Vagina (tissue), 2 donors: ENCODE measurements at regions of chr19 and their contacts with region 1.

Region 1: GRCh38 chr19:16111160-16111908 is at the start of gene RAB8A:
- DNase-seq: peak in 1 of 2 donors; percentile 100
- H3K4me3 ChIP-seq: peak within 1 kb of the TSS; percentile 58 to 90
- H3K27ac ChIP-seq: peak within 1 kb of the TSS; percentile 88
- H3K4me1 ChIP-seq: peaks cover 53% of the 10 kb centered on the region
- H3K27me3 ChIP-seq: no peaks in the 10 kb centered on the region
- CTCF ChIP-seq: peak; percentile 94 to 99 (median 99)
- POLR2A ChIP-seq: peak in 1 of 2 donors; percentile 51
- total RNA-seq, gene RAB8A: 30.4 TPM

Region 2: DNA sequence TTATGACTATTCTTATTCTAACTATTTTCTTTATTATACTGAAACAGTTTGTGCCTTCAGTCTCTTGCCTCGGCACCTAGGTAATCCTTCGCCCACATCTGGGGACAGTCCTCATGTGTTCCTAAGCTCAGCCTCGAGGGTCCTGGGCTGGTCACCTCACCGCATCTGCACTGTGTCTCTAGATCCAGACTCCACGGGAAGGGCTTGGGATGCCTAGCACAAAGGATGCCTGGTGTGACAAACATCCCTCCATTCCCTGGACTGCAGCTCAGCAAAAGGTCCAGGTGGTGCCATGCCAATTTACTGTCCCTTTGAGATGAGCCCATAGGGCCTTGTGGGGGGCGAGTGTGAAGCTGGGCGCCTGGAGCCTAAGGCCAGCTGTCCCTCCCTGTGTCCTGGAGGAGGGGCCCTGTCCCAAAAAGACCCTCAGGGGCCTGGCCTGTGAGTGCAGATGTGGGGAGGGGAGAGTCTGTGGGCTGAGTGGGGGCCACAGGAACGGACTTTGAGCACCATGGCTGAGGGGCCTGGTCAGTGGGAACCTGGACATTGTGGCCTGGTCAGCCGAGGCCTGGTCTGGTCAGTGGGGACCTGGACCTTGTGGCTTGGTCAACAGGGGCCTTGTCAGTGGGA is 80.3 kb before region 1 on chr19:
- intact Hi-C with region 1: no loop called
- DNase-seq: no peak
- H3K4me3 ChIP-seq: no peak overlapping the region
- H3K27ac ChIP-seq: no peak overlapping the region
- H3K4me1 ChIP-seq: no peaks in the 10 kb centered on the region
- H3K27me3 ChIP-seq: no peaks in the 10 kb centered on the region
- CTCF ChIP-seq: no peak
- POLR2A ChIP-seq: no peak

Region 3: DNA sequence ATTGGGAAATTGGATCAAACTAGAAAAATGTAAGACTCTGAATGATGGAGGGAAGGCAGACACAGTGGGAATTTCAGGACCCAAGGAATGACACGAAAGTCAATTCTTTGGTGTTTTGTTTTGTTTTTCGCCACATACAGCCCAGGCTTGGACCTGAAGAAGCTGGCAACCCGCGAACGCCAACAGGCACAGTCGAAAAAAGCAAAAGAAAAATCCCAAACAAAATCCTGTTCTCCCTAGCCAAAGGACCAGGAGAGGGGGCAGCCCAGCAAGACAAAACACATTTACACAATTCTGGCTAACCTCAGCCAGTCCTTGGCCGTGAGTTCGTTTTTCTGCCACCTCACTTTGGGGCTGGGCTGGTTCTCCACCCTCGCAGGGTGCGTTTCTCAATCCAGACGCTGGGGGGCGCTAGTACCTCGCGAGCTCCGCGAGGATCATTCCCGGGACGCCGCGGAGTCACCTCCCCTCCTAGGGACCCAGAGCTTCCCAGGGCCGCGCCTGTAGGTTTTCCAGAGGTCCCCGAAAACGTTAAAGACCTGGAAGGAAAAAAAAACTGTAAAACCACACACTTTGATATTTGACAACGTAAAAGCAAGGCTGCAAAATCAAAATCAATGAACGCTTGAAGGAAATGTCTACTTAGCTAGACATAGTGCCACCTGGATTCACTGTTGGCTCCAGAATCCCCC is 69.9 kb before region 1 on chr19:
- intact Hi-C with region 1: loop called (anchors 5 kb)
- DNase-seq: no peak
- H3K4me3 ChIP-seq: peak overlapping the region in 1 of 2 donors; percentile 15
- H3K27ac ChIP-seq: no peak overlapping the region
- H3K4me1 ChIP-seq: peaks cover 12% of the 10 kb centered on the region
- H3K27me3 ChIP-seq: no peaks in the 10 kb centered on the region
- CTCF ChIP-seq: peak; percentile 93 to 98 (median 96)
- POLR2A ChIP-seq: no peak

Region 4: GRCh38 chr19:16070366-16070990 is 40.9 kb before region 1 on chr19:
- intact Hi-C with region 1: loop called (anchors 5 kb)
- DNase-seq: peak in 1 of 2 donors; percentile 93
- H3K4me3 ChIP-seq: peak overlapping the region; percentile 47 to 69
- H3K27ac ChIP-seq: peak overlapping the region; percentile 89
- H3K4me1 ChIP-seq: peaks cover 52% of the 10 kb centered on the region
- H3K27me3 ChIP-seq: no peaks in the 10 kb centered on the region
- CTCF ChIP-seq: no peak
- POLR2A ChIP-seq: no peak

Region 5: DNA sequence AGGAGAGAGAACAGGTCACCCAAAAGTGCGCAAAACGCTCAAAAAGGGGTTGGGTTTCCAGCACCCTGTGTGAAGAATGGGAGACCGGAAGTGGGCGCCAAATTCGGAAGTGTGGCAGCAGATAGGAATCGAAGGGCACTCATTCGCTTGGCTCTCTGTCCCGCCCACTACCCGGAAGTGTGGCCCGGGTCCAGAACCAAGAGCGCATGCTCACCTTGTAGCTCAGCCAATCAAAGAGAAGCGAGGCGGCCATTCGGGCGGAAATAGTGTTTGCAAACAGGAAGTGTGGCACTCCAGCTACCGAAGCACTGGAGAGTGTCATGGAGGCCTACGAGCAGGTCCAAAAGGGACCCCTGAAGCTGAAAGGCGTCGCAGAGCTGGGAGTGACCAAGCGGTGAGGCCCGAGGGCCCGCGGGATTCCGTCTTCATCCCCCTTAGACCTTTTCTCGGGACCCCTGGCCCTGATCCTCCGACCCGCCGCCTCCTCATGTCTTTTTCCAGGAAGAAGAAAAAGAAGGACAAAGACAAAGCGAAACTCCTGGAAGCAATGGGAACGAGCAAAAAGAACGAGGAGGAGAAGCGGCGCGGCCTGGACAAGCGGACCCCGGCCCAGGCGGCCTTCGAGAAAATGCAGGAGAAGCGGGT is 73.9 kb after region 1 on chr19 and contains the start of gene FAM32A:
- intact Hi-C with region 1: loop called (anchors 10 kb)
- DNase-seq: peak in 1 of 2 donors; percentile 99
- H3K4me3 ChIP-seq: peak within 1 kb of the TSS; percentile 67 to 84
- H3K27ac ChIP-seq: peak within 1 kb of the TSS; percentile 72
- H3K4me1 ChIP-seq: peaks cover 35% of the 10 kb centered on the region
- H3K27me3 ChIP-seq: no peaks in the 10 kb centered on the region
- CTCF ChIP-seq: peak in 1 of 3 experiments; percentile 13
- POLR2A ChIP-seq: peak in 1 of 2 donors; percentile 63
- total RNA-seq, gene FAM32A: 57.2 TPM